ENCODE measurements at regions of chr14 and their contacts with region 1.

Region 1: DNA sequence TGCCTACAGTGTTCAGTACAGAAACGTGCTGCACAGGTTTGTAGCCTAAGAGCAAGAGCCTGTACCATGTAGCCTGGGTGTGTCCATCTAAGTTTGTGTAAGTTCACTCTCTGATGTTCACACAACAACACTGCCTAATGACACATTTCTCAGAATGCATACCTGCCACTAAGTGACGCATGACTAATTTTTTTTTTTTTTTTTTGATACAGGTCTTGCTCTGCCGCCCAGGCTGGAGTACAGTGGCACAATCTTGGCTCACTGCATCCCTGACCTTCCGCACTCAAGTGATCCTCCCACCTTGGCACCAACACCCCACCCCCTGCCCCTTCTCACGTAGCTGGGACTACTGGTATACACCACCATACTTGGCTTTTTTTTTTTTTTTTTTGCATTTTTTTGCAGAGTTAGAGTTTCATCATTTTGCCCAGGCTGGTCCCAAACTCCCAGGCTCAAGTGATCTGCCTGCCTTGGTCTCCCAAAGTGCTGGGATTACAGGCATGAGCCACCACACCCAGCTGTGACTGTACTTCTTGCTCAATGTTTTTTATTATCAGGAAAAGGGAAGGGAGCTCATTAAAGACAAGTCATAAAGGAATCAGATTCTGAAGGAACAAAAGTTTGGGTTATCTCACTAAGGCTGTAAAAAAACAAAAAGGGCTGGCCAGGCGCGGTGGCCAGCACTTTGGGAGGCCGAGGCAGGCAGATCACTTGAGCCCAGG is 10.0 kb upstream of the CDC42BPB start:
- DNase-seq: peak; percentile 78
- H3K4me3 ChIP-seq: no peak overlapping the region
- H3K27me3 ChIP-seq: no peaks in the 10 kb centered on the region
- CTCF ChIP-seq: no peak

Region 2: DNA sequence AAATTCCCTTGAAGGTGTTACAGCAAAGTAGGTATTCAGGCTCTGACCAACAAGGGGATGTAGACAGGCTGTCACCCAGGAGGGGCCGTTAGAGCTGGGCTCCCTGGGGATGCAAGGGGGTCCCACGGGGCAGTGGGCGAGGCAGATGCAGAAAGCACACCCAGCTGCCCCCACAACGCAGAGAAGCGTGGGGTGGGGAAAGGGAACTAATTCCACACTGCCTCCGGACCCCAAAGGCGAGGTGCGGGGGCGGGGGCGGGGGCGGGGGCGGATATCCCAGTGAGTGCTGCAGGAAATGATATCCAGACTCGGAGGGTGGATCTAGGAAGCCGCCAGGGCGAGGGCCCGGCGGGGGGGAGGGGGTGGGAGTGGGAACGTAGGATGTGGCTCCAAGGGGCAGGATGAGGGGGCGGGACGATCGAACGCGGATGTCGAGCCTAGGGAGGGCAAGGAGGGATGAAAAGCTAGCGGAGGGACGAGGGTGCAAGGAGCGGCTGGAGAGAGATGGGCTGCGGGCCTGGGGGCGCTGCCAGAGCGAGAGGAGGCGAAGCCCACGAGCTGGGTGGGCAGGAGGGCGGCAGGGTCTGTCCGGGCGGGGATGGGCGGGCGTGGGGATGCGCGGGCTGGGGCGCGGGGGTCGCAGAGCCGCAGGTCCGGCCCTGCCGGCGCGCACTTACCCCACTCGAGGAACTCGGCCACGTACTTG is 10.9 kb before region 1 on chr14:
- CTCF ChIA-PET with region 1: interaction called, 3 read pairs
- POLR2A ChIA-PET with region 1: interaction called, 10 read pairs
- DNase-seq: no peak
- H3K4me3 ChIP-seq: peak overlapping the region; percentile 99
- H3K27me3 ChIP-seq: no peaks in the 10 kb centered on the region
- CTCF ChIP-seq: no peak

Region 3: DNA sequence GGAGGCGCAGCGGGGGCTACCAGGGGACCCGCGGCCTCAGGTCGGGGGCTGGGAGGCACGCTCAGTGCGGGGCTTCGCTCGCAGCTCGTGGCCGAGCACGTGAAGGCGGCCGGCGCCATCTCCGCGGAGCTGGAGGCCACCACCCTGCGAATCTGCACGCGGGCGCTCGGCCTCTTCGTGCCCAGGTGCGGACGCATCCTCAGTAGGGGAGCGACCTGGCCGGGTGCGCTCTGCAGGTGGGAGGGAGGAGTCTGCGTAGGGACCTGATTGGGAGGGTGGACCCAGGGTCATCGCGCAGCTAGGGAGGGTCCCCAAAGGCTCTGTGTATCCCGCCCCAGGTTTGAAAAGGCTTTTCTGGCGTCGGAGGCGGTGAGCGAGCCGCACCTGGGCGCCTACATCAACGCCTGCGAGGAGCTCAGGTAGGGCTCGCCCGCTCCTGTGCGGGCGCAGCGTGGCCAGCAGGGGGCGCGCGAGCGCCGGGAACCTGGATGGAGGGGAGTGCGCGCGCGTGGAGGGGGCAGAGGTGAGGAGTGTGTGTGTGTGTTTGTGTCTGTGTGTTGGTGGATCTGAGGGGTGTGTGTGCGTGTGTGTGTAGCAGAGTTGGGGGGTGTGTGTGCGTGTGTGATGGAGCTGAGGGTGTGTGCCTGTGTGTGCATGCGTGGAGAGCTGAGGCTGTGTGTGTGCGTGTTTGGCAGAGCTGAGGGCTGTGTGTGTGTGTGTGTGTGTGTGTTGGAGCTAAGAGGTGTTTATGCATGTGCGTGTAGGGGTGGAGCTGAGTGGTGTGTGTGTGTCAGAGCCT is 37.5 kb after region 1 on chr14:
- CTCF ChIA-PET with region 1: no interaction called
- POLR2A ChIA-PET with region 1: no interaction called
- DNase-seq: no peak
- H3K4me3 ChIP-seq: no peak overlapping the region
- H3K27me3 ChIP-seq: peaks cover 19% of the 10 kb centered on the region
- CTCF ChIP-seq: peak; percentile 99

Region 4: GRCh38 chr14:103141119-103141796 is 73.9 kb after region 1 on chr14:
- CTCF ChIA-PET with region 1: no interaction called
- POLR2A ChIA-PET with region 1: no interaction called
- DNase-seq: no peak
- H3K4me3 ChIP-seq: no peak overlapping the region
- H3K27me3 ChIP-seq: peaks cover 2% of the 10 kb centered on the region; the same call in 1 of the 2 replicates
- CTCF ChIP-seq: peak; percentile 77